Lower leg skin (tissue), 4 donors: ENCODE measurements at regions of chr6 and their contacts with region 1.

Region 1: GRCh38 chr6:89432875-89433251 is at the start of gene ANKRD6:
- DNase-seq: peak; percentile 41 to 94
- H3K4me3 ChIP-seq: peak within 1 kb of the TSS; percentile 58
- CTCF ChIP-seq: no peak
- POLR2A ChIP-seq: no peak
- total RNA-seq, gene ANKRD6: 3.2 to 6.7 (median 4.8) TPM

Region 2: GRCh38 chr6:89172131-89172530 is 260.7 kb before region 1 on chr6:
- intact Hi-C with region 1: no loop called
- DNase-seq: no peak
- H3K4me3 ChIP-seq: no peak overlapping the region
- CTCF ChIP-seq: no peak
- POLR2A ChIP-seq: no peak

Region 3: GRCh38 chr6:89610149-89610642 is 177.3 kb after region 1 on chr6:
- intact Hi-C with region 1: loop called (anchors 10 kb)
- DNase-seq: peak; percentile 32 to 91
- H3K4me3 ChIP-seq: no peak overlapping the region
- CTCF ChIP-seq: no peak
- POLR2A ChIP-seq: no peak